Transverse colon (tissue), 4 donors: ENCODE measurements at regions of chr14 and their contacts with region 1.

Region 1: GRCh38 chr14:99628832-99629618 is 15.9 kb upstream of the HHIPL1 start:
- DNase-seq: peak; percentile 81
- H3K4me3 ChIP-seq: no peak overlapping the region
- H3K27ac ChIP-seq: no peak overlapping the region
- H3K4me1 ChIP-seq: peaks cover 0 to 5% (median 3%) of the 10 kb centered on the region in 4 donors
- H3K27me3 ChIP-seq: no peaks in the 10 kb centered on the region
- CTCF ChIP-seq: peak; percentile 97 to 98 (median 97)
- EP300 ChIP-seq: no peak
- POLR2A ChIP-seq: no peak

Region 2: DNA sequence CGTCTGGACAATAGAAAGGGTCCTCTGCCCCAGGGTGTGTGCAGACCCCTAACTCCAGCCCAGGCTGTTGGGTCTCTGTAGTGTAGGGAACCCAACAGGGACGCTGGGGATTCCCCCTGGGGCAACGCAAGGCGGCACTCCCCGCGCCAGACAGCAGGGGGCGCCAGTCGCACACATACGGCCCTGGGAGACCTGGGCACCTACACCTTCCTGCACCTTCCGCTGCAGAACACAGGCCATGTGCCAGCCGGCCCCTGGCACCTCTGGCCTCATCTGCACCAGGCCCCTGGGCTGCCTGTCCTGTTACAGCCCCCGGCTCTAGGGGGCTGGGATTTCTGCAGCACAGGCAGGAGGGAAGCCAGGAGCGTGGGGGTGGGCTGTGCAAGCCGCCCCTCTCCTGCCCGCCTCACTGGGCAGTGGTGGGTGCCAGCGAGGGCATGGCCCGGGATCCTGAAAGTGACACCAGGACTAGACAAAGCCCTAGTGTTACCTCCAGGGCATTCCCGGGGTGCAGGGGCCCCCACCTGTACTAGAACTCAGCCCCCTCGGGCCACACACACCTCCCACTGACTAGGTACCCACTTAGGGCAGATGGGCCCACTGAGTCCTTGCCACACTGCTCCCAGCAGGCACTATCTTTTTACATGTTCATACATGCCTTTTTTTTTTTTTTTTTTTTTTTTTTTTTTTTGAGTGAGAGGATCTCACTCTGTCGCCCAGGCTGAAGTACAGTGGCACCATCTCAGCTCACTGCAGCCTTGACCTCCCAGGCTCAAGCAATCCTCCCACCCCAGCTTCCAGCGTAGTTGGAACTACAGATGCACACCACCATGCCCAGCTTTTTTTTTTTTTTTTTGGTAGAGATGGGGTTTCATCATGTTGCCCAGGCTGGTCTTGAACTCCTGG is 110.3 kb before region 1 on chr14:
- in situ Hi-C with region 1: loop called in 2 of 4 experiments (anchors 5 to 25 kb)
- intact Hi-C with region 1: loop called (anchors 2 kb)
- DNase-seq: peak; percentile 86
- H3K4me3 ChIP-seq: no peak overlapping the region
- H3K27ac ChIP-seq: no peak overlapping the region
- H3K4me1 ChIP-seq: peaks cover 14 to 26% (median 19%) of the 10 kb centered on the region in 4 donors
- H3K27me3 ChIP-seq: no peaks in the 10 kb centered on the region
- CTCF ChIP-seq: peak; percentile 95 to 99 (median 97)
- EP300 ChIP-seq: no peak
- POLR2A ChIP-seq: no peak

Region 3: GRCh38 chr14:99524804-99525698 is 104.0 kb before region 1 on chr14:
- in situ Hi-C with region 1: loop called in 2 of 4 experiments (anchors 5 to 25 kb)
- intact Hi-C with region 1: no loop called
- DNase-seq: peak; percentile 38
- H3K4me3 ChIP-seq: no peak overlapping the region
- H3K27ac ChIP-seq: peak overlapping the region; percentile 43 to 84 (median 70)
- H3K4me1 ChIP-seq: peaks cover 31 to 43% (median 34%) of the 10 kb centered on the region in 4 donors
- H3K27me3 ChIP-seq: no peaks in the 10 kb centered on the region
- CTCF ChIP-seq: peak in 1 of 5 experiments; percentile 16
- EP300 ChIP-seq: no peak
- POLR2A ChIP-seq: no peak

Region 4: DNA sequence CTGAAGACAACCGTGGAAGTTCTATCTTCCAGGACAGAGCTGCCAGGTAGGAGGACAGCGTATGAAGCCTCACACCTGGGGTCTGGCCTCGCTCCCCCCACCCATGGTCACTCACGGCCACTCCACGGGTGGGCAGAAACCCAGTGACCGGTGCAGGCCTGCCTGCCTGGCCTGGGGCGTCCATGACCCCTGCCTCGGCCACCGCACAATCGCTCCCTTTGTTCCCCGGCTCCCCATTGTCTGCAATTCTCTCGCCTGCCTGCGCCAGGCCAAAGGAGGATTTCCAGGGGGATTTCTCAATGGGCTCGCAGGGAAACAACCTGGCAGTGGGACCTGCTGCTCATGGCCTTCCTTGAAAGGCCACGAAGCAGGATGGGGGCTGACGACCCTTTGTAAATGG is 47.7 kb before region 1 on chr14:
- in situ Hi-C with region 1: no loop called
- intact Hi-C with region 1: loop called (anchors 1 kb)
- DNase-seq: no peak
- H3K4me3 ChIP-seq: no peak overlapping the region
- H3K27ac ChIP-seq: peak overlapping the region in 3 of 4 donors; percentile 85 to 89 (median 88)
- H3K4me1 ChIP-seq: peaks cover 37 to 51% (median 49%) of the 10 kb centered on the region in 4 donors
- H3K27me3 ChIP-seq: no peaks in the 10 kb centered on the region
- CTCF ChIP-seq: no peak
- EP300 ChIP-seq: no peak
- POLR2A ChIP-seq: no peak

Region 5: DNA sequence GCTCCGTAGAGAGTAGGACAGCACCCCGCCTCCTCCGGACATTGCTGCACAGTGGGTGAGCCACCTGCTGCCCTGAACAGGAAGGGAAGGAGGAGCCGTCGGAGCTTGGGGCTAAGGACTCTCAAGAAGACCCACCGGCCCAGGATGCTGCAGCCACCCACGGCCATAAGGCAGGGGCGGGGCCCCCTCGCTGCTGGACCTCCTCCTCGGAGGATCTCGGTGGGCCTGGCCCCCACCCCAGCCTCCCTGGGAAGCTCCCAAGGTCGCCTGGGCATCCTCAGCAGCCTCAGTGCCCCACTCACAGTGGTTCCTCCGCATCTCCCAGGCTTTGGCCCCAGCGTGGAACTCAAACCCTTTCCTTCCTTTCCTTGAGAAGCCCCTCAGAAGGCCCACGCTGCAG is 1863.7 kb after region 1 on chr14:
- in situ Hi-C with region 1: no loop called
- intact Hi-C with region 1: no loop called
- DNase-seq: peak; percentile 6
- H3K4me3 ChIP-seq: no peak overlapping the region
- H3K27ac ChIP-seq: no peak overlapping the region
- H3K4me1 ChIP-seq: peaks cover 0 to 8% (median 0%) of the 10 kb centered on the region in 4 donors
- H3K27me3 ChIP-seq: peaks cover 6% of the 10 kb centered on the region
- CTCF ChIP-seq: no peak
- EP300 ChIP-seq: no peak
- POLR2A ChIP-seq: no peak